Activated naive CD4-positive, alpha-beta T cell treated with anti-CD3 and anti-CD28 coated beads, Interleukin-2, amount 10 ng/mL, durations not matched to agents 7 days and 5 days (primary cell): ENCODE measurements at regions of chr7 and their contacts with region 1.

Region 1: DNA sequence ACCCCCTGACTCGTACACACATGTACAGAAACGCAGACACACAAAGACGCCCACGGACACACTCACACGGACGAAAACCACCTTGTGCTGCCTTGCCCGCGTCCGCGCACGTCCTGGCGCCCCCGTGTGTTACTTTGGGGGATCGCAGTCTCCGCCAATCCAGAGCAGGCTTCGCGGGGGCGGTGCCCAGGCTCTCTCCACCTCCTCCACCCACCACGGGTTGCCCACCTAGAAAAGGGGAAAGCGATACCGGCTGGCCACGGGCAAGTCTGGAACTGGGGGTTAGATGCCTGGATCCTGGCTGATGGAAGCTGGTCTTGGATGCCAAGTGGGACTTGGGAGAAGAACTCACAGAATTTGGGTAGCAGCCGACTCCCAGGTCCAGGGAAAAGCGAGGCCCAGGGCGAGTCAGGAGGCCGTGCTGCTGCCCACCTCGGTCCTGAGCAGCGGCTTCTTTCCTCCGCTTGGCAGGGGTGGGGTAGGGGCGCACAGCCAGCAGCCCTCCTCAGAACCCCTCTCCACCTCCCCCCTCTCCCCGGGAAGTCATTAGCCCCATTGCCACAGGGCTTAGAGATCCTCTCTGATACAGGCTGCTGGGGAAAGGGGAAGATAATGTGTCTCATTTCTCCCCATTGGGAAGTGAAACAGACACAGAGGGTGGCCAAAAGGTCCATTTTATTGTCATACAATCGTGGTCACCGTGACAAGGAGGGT is 4.6 kb upstream of the VGF start:
- DNase-seq: peak; percentile 87
- H3K4me3 Mint-ChIP-seq: no peak overlapping the region
- H3K27ac Mint-ChIP-seq: no peak overlapping the region
- H3K4me1 Mint-ChIP-seq: peaks cover 73% of the 10 kb centered on the region
- H3K27me3 Mint-ChIP-seq: peaks cover 100% of the 10 kb centered on the region

Region 2: DNA sequence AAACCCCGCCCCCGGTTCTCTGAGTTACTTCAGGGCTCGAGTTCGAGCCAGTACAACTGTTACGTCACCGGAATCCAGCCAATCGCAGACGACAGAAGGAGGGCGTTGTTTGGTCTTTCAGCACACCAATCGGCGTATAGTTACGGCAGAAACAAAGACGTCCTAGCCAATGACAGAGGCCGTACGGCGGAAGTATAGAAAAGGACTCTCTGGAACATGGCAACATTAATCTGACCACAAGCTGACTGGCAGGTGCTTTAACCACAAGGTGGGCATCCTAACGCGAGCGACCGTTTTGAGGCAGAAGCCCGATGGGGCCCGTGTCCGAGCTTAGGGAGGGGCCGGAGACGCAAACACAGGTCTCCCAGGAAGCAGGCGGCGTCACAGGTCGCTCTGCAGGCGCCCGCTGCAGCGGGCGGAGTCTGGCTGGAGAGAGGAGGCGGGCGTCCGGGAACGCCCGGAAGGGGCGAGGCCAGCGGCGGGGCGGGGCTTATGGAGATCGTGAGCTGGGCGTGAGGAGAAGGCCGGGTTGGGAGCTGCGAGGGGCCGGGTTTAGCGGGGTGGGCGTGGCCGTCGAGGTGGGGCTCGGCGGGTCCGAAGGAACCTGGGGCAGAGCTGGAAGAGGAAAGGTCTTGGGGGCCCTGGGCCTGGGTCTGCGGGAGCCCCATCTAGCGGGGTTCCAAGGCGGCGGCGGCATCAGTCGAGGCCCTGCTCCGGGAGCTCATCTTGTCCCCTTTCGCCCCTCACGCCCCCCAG is 557.8 kb before region 1 on chr7 and contains the start of gene MOSPD3:
- CTCF ChIA-PET with region 1: no interaction called
- DNase-seq: peak; percentile 99
- H3K4me3 Mint-ChIP-seq: peak within 1 kb of the TSS; percentile 91
- H3K27ac Mint-ChIP-seq: peak within 1 kb of the TSS; percentile 99
- H3K4me1 Mint-ChIP-seq: peaks cover 38% of the 10 kb centered on the region
- H3K27me3 Mint-ChIP-seq: peaks cover 22% of the 10 kb centered on the region

Region 3: GRCh38 chr7:101058355-101058754 is 111.6 kb before region 1 on chr7:
- CTCF ChIA-PET with region 1: no interaction called
- DNase-seq: peak; percentile 80
- H3K4me3 Mint-ChIP-seq: no peak overlapping the region
- H3K27ac Mint-ChIP-seq: no peak overlapping the region
- H3K4me1 Mint-ChIP-seq: no peaks in the 10 kb centered on the region
- H3K27me3 Mint-ChIP-seq: peaks cover 43% of the 10 kb centered on the region

Region 4: GRCh38 chr7:101186844-101187428 is 16.9 kb after region 1 on chr7:
- CTCF ChIA-PET with region 1: interaction called, 11 read pairs
- DNase-seq: no peak
- H3K4me3 Mint-ChIP-seq: no peak overlapping the region
- H3K27ac Mint-ChIP-seq: no peak overlapping the region
- H3K4me1 Mint-ChIP-seq: no peaks in the 10 kb centered on the region
- H3K27me3 Mint-ChIP-seq: peaks cover 40% of the 10 kb centered on the region